PC-9 (cell line): ENCODE measurements at regions of chr20 and their contacts with region 1.

Region 1: GRCh38 chr20:24503352-24503937 is 34.0 kb downstream of the SYNDIG1 start:
- DNase-seq: no peak
- H3K4me3 ChIP-seq: no peak overlapping the region
- H3K27ac ChIP-seq: no peak overlapping the region
- H3K4me1 ChIP-seq: no peaks in the 10 kb centered on the region
- H3K27me3 ChIP-seq: no peaks in the 10 kb centered on the region
- CTCF ChIP-seq: no peak

Region 2: DNA sequence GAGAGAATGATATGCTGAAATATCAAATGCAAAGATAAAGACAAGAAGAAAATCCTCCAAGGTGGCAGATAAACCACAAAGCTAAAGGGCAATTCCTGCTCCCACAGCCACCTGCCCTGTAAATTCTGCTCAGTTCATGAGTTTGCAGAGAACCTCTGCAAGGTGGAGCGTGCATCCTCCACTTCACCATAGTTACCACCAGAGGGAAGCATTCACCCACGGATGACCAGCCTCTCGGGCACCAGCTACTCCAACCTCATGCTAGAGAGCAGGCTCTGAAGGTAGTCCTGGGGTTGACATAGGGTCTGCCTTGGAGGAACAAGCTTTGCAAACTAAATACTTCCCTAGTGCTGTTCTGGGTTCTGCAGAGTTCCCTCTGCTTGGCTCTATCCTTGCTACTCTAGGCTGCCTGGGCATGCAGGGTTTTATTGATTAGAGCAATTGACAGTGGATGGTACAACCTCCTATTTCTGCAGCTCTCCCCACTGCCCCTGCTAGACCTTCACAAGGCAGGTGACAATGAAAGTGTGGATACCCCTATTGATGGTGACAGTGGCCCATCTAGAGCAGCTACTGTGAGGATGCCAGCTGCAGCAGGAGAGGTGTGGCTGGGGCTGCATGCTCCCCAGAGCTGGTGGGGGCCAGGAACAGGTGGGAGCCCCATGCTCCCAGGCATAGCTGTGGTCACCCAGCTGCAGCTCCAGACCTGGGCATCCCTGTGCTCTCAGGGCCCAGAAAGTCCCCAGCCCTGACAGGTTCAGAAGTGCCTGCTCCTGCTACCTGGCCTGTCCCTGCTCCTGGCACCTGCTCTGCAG is 565.9 kb before region 1 on chr20:
- CTCF ChIA-PET with region 1: interaction called, 11 read pairs
- POLR2A ChIA-PET with region 1: no interaction called
- intact Hi-C with region 1: no loop called
- DNase-seq: peak; percentile 60 to 75
- H3K4me3 ChIP-seq: no peak overlapping the region
- H3K27ac ChIP-seq: no peak overlapping the region
- H3K4me1 ChIP-seq: no peaks in the 10 kb centered on the region
- H3K27me3 ChIP-seq: no peaks in the 10 kb centered on the region
- CTCF ChIP-seq: peak; percentile 92

Region 3: GRCh38 chr20:24519476-24519875 is 16.0 kb after region 1 on chr20:
- CTCF ChIA-PET with region 1: interaction called, 20 read pairs
- POLR2A ChIA-PET with region 1: no interaction called
- intact Hi-C with region 1: no loop called
- DNase-seq: no peak
- H3K4me3 ChIP-seq: no peak overlapping the region
- H3K27ac ChIP-seq: no peak overlapping the region
- H3K4me1 ChIP-seq: no peaks in the 10 kb centered on the region
- H3K27me3 ChIP-seq: no peaks in the 10 kb centered on the region
- CTCF ChIP-seq: no peak

Region 4: DNA sequence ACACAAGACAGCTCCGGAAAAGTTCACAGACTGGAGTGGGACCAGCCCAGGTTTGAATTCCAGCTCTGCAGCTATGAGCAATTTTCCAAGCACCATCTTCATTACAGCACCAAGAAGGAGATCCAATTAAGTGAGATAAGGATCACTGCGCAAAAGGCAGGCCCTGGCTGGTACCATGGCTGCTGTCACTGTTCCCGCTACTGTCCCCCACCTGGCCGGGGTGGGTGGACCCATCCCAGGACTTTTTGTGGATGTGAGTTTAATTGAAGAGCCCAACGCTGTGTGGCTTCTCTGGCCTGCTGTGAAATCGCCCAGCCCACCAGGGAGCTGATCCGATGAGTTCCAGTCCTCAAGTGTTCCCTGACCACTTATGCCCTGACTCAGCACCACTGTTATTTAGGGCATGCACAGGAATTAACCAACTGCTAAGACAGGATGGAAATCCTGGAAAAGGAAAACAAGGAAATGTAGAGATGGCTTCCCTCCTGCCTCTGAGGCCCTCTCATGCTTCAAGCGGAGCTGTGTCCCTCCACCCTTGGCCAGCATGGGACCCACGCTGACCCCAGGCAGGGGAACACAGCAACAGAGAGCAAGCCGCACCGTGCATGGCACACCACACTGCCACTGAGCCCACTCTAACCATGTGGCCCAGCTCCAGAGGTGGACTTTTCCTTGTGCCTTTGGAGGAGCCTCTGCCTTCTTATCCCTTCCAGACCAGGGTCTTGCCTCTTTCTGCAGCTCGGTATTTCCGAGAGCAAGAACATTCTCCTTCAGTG is 295.7 kb after region 1 on chr20:
- CTCF ChIA-PET with region 1: no interaction called
- POLR2A ChIA-PET with region 1: interaction called, 11 read pairs
- intact Hi-C with region 1: no loop called
- DNase-seq: no peak
- H3K4me3 ChIP-seq: no peak overlapping the region
- H3K27ac ChIP-seq: no peak overlapping the region
- H3K4me1 ChIP-seq: no peaks in the 10 kb centered on the region
- H3K27me3 ChIP-seq: 0 out of 2 replicates have a peak, but pooled peaks cover 3% of the 10 kb centered on the region
- CTCF ChIP-seq: no peak

Region 5: GRCh38 chr20:25136643-25137559 is 633.5 kb after region 1 on chr20:
- CTCF ChIA-PET with region 1: no interaction called
- POLR2A ChIA-PET with region 1: no interaction called
- intact Hi-C with region 1: no loop called
- DNase-seq: peak; percentile 84 to 88
- H3K4me3 ChIP-seq: no peak overlapping the region
- H3K27ac ChIP-seq: peak overlapping the region; percentile 58
- H3K4me1 ChIP-seq: peaks cover 22% of the 10 kb centered on the region
- H3K27me3 ChIP-seq: no peaks in the 10 kb centered on the region
- CTCF ChIP-seq: no peak